ENCODE measurements at regions of chr5 and their contacts with region 1.

Region 1: DNA sequence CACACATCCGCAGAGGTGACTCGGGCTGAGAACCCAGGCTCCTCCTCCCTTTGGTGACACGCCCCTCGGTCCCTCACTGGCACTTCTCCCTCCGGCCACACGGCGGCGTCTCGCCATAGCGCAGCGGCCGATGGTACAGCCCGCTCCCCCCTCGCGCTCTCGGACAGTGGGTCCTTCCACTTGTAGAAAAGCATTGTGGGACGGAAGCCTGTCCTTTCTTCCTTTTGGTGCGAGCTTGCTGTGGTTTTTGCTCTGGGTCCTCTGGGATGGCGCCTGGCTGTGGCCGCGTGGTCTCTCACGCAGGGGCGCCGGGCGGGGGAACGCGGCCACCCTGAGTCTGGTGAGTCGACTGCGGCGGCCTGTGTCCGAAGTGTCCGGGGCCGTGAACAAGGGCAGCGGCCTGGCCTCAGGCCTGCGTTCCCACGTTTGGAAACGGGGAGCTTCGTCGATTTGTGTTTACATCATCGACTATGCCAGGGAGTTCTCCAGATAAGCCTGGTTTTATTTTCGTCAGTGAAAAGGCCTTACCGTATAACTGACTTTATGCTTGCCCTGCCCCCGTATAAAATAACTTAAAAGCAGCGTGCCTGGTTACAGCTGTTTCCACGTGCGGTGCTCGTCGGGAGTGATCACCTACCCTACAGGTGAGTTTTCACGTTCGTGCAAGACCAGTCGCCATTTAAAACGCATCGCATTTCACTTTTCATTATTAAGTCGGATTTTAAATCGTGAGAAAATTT is 258.3 kb downstream of the EPB41L4A start:
- DNase-seq: peak; percentile 89
- H3K4me3 Mint-ChIP-seq: peak overlapping the region; percentile 93
- H3K27ac Mint-ChIP-seq: peak overlapping the region; percentile 87
- H3K4me1 Mint-ChIP-seq: peaks cover 30% of the 10 kb centered on the region
- H3K27me3 Mint-ChIP-seq: peaks cover 3% of the 10 kb centered on the region

Region 2: DNA sequence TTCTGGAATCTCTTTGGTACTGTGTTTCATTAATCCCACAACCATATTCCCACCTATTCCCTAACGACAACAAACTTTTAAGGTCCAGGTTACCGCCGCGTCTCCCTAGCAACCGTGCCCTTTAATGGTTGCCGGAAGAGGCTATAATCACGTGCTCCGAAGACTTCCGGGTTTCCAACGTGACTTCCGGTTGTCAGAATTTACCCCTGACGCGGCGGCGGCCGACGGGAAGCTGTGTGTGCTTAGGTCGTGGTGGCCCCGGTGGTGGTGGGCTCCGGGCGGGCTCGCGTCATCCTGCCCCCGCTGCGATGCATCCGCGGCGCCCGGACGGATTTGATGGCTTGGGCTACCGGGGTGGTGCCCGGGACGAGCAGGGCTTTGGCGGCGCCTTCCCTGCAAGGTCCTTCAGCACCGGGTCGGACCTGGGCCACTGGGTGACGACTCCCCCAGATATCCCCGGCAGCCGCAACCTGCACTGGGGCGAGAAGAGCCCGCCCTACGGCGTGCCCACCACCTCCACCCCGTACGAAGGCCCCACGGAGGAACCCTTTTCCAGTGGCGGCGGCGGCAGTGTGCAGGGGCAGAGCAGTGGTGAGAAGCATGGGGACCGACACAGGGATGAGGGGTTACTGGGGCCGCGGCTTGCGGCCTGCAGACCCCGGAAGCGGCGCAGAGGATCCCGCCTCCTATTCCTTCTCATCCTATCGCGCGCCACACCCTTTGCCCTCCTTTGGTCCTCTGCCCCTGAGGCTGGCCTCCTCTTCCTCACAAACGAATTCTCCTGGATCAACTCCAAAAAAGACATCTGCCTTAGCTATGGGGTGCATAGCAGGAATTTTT is 1421.8 kb before region 1 on chr5 and contains the start of gene SLC25A46:
- intact Hi-C with region 1: loop called (anchors 5 kb)
- DNase-seq: peak; percentile 85
- H3K4me3 Mint-ChIP-seq: peak within 1 kb of the TSS; percentile 97
- H3K27ac Mint-ChIP-seq: peak within 1 kb of the TSS; percentile 96
- H3K4me1 Mint-ChIP-seq: peaks cover 39% of the 10 kb centered on the region
- H3K27me3 Mint-ChIP-seq: peaks cover 11% of the 10 kb centered on the region
- total RNA-seq, gene SLC25A46: 54.6 and 55.4 TPM in 2 replicates

Region 3: DNA sequence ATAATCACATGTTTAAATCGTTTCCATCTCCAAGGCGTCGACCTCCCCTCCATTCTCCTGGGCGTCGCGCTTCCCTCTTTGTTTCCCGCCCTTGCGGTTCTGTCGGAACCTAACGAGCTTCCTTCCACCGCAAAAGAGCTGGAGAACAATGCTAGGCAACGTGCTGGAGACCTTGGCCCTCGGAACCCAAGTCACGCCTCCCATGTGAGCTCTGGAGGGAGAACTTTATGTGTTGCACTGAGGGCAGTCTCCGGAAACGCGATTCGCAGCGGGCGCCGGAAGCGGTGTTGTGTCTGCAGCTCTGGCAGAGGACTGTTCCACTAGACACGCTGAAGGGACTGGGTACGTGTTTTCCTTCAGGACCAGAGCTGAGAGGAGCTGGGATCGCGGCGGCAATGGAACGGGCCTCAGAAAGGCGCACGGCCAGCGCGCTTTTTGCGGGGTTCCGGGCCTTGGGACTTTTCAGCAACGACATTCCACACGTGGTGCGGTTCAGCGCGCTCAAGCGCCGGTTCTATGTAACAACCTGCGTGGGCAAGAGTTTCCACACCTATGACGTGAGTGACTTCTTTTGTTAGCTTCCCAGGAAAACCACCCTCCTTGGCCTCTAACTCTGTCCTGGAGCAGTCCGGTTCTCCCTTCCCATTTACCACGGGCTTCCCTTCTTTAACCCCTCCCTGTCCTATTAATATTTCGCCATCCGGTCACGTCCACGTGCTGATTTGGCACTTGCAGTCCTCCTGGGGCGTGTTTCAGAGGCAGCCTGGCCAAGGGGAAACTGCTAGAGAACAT is 1068.6 kb before region 1 on chr5 and contains the start of gene WDR36:
- intact Hi-C with region 1: loop called (anchors 1 kb)
- DNase-seq: peak; percentile 83
- H3K4me3 Mint-ChIP-seq: peak within 1 kb of the TSS; percentile 98
- H3K27ac Mint-ChIP-seq: peak within 1 kb of the TSS; percentile 97
- H3K4me1 Mint-ChIP-seq: peaks cover 42% of the 10 kb centered on the region
- H3K27me3 Mint-ChIP-seq: peaks cover 2% of the 10 kb centered on the region
- total RNA-seq, gene WDR36: 82.5 and 85.7 TPM in 2 replicates

Region 4: DNA sequence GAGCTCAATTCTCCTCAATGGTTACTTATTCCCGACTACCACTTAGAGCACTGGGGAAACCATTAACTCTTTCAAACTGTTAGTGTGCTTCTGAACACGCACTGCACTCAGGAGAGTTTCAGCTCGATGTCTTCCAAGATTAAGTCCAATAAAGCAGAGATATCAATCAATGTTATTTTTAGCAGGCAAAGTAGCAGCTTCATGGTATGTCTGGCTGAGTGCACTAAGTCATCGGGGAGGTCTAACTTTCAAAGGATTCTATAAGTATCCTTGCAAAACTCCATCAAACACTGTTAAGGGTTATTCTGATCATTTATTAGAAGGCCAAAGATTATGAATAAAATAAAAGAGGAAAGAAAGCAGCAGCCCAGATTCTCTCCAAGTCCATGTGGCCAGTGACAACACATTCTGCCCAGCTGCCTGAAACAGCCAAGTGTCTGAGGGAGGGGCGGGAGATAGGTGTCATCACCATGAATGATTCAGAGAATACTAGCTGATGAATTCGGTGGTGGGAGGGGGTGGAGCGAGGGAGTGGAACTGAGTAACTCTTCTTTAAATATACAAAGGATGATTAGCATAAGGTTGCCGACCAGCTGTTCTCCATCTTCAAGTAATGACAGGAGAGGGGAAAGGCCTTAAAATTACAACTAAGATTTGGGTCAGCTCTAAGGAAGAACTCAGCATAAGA is 425.1 kb before region 1 on chr5:
- intact Hi-C with region 1: loop called (anchors 5 kb)
- DNase-seq: no peak
- H3K4me3 Mint-ChIP-seq: no peak overlapping the region
- H3K27ac Mint-ChIP-seq: peak overlapping the region; percentile 22
- H3K4me1 Mint-ChIP-seq: peaks cover 48% of the 10 kb centered on the region
- H3K27me3 Mint-ChIP-seq: no peaks in the 10 kb centered on the region

Region 5: GRCh38 chr5:112174959-112175594 is 14.3 kb after region 1 on chr5:
- intact Hi-C with region 1: no loop called
- DNase-seq: no peak
- H3K4me3 Mint-ChIP-seq: no peak overlapping the region
- H3K27ac Mint-ChIP-seq: no peak overlapping the region
- H3K4me1 Mint-ChIP-seq: no peaks in the 10 kb centered on the region
- H3K27me3 Mint-ChIP-seq: peaks cover 19% of the 10 kb centered on the region

Region 6: DNA sequence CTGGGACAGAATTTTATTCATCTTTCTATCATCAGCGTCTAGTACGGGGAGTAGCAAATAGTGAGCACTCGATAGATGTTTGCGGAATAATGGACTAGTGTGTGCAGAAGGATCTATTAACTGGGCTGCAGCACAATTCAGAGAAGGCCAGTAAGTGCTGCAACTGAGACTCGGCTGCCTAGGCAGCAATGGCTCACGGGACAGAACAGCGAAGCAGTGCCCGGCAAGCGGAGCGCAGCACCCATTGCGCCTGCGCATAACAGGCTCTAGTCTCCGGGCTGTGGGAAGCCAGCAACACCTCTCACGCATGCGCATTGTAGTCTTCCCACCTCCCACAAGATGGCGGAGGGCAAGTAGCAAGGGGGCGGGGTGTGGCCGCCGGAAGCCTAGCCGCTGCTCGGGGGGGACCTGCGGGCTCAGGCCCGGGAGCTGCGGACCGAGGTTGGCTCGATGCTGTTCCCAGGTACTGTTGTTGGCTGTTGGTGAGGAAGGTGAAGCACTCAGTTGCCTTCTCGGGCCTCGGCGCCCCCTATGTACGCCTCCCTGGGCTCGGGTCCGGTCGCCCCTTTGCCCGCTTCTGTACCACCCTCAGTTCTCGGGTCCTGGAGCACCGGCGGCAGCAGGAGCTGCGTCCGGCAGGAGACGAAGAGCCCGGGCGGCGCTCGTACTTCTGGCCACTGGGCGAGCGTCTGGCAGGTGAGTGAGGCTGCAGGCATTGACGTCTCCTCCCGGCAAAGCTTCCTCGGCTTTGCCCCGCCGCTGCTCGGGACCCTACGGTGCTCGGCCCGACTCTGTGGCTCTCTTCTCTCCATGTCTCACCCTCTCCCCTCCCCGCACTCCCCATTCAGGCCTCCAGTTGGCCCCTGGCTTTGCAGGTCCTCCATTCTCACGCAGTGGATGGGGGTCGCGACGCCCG is 546.6 kb after region 1 on chr5:
- intact Hi-C with region 1: loop called (anchors 2 kb)
- DNase-seq: peak; percentile 96
- H3K4me3 Mint-ChIP-seq: peak overlapping the region; percentile 94
- H3K27ac Mint-ChIP-seq: peak overlapping the region; percentile 81
- H3K4me1 Mint-ChIP-seq: peaks cover 37% of the 10 kb centered on the region
- H3K27me3 Mint-ChIP-seq: peaks cover 8% of the 10 kb centered on the region

Region 7: DNA sequence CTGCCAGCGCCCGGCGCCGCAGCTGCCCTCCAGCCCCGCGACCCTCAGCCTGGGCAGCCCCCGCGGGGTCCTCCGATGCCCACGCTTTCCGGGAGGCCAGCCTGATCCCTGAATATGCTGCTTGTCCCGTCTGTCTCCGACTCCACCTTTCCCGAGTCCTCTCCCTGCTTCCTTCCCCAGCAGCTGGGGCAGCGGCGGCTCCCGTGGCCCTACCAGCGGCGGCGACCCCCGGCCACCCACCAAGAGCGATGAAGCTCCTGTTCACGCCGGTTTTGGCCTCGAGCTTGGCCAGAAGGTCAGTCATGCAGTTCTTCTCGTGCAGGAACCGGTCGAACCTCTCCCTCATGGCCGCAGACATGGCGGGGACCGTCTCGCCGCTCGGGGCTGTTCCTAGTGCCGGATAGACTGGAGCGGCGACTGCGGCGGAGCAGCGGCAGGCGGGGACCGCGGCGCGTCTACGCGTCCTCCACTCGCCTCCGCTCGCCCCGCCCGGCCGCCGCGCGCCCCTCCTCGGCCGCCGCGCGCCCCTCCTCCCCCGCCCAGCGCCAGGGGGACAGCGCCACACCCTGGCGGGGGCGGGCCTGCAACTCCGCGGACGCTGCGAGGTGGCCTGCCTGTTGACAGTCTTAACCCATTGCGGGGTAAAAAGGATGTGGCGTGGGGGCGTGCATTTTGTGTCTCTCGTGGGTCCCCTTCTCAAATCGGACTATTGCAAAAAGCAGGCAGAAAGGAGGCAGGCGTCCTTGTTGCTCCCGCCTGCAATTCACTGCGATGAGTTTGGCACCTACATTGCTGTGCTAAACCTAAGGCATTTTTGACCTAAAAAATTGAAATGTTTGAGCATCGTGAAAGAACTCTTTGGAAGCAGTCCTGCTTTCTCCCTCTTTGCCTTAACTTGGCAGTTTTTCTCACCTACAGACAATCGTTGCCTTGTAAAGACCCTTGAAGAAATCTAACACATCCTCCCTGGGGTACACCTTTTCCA is 761.3 kb after region 1 on chr5 and contains the start of gene REEP5:
- intact Hi-C with region 1: loop called (anchors 5 kb)
- DNase-seq: peak; percentile 85
- H3K4me3 Mint-ChIP-seq: peak within 1 kb of the TSS; percentile 95
- H3K27ac Mint-ChIP-seq: peak within 1 kb of the TSS; percentile 93
- H3K4me1 Mint-ChIP-seq: peaks cover 62% of the 10 kb centered on the region
- H3K27me3 Mint-ChIP-seq: no peaks in the 10 kb centered on the region
- total RNA-seq, gene REEP5: 77.5 and 77.9 TPM in 2 replicates

Region 8: DNA sequence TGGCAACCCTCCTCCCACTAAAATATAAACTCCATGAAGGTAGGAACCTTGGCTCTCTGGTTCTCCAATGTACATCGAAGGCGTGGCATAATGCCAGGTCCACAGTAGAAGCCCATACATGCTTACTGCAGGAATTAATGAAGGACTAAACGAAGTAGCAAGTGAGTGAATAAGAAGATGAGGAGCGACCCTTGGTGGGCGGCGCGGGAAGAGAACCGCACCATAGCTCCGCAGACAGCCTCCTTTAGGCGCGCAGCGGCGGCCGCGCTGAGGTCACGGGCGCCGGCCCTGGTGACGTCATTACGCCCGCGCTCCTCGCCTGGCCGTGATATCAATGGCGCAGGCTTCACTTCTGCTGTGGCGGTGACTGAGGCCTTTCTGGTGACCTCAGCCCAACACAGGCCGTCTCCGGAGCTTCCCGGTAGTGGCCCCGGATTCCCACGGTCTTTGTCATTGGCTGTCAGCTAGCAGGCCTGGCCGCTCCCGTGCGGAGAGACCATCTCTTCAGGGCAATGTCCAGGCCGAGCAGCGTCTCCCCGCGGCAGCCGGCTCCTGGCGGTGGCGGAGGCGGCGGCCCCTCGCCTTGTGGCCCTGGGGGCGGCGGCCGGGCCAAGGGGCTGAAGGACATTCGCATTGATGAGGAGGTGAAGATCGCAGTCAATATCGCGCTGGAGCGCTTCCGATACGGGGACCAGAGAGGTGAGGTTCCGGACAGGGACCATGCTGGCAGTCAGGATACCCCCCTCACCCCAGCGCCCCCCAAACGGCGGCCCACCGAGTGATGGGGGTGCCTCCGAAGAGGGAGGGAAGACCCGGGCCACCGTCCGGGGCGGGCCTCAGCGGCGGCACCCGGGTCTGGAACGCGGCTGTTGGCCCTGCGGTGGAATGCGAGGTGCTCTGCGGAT is 1352.8 kb after region 1 on chr5 and contains the start of gene YTHDC2:
- intact Hi-C with region 1: loop called (anchors 10 kb)
- DNase-seq: peak; percentile 82
- H3K4me3 Mint-ChIP-seq: peak within 1 kb of the TSS; percentile 94
- H3K27ac Mint-ChIP-seq: peak within 1 kb of the TSS; percentile 87
- H3K4me1 Mint-ChIP-seq: peaks cover 35% of the 10 kb centered on the region
- H3K27me3 Mint-ChIP-seq: peaks cover 9% of the 10 kb centered on the region
- total RNA-seq, gene YTHDC2: 26.0 and 27.5 TPM in 2 replicates